ENCODE measurements at regions of chr6 and their contacts with region 1.

Region 1: DNA sequence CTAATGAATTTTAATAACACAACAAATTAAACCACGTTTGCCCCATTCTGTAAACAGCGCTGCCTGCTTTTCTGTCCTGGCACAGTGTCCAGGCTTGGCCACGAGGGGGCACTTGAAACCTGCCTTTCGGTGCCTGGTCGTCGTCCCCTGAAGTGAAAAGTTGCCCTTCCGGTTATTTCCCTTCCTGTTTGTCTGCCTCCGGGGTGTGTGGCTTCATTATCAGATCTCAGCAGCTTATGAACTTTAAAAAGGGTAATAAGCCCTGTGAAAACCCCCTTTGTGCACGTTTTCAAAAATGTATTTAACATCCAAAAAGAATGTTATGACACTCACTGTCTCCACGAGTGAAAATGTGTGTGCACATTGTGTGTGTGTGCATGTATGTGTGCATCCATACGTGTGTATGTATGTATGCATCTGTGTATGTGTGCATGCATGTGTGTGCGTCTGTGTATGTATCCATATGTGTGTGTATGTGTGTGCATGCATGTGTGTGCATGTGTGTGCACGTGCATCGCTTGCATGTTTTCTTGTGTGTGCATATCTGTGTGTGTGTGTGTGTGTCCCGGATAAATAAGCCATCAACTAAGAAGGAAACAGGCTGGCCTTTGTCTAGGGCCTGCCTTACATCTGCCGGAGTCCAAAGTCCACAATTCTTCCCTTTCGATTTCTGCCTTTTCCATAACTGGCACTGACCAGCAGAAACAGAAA is 358.4 kb downstream of the THBS2 start:
- DNase-seq: peak; percentile 81 to 88 (median 86)
- ATAC-seq: peak; percentile 99
- H3K4me3 ChIP-seq: no peak overlapping the region
- H3K27ac ChIP-seq: no peak overlapping the region
- H3K4me1 ChIP-seq: no peaks in the 10 kb centered on the region
- H3K27me3 ChIP-seq: peaks cover 13 to 47% of the 10 kb centered on the region in 2 experiments; a peak in 4 of 5 replicates
- CTCF ChIP-seq: peak; percentile 92 to 96 (median 95)
- EP300 ChIP-seq: 0 out of 2 replicates have a peak, but pooled peaks have one; percentile 24
- POLR2A ChIP-seq: no peak
- RAD21 ChIP-seq: peak; percentile 91 to 92

Region 2: GRCh38 chr6:169332250-169332649 is 437.0 kb after region 1 on chr6:
- CTCF ChIA-PET with region 1: no interaction called
- POLR2A ChIA-PET with region 1: no interaction called
- in situ Hi-C with region 1: no loop called
- intact Hi-C with region 1: loop called (anchors 5 kb)
- DNase-seq: no peak
- ATAC-seq: no peak
- H3K4me3 ChIP-seq: no peak overlapping the region
- H3K27ac ChIP-seq: no peak overlapping the region
- H3K4me1 ChIP-seq: no peaks in the 10 kb centered on the region
- H3K27me3 ChIP-seq: peaks cover 6 to 14% of the 10 kb centered on the region in 2 experiments; a peak in 4 of 5 replicates
- CTCF ChIP-seq: no peak
- EP300 ChIP-seq: no peak
- POLR2A ChIP-seq: no peak
- RAD21 ChIP-seq: no peak

Measured in K562 (cell line).